H1 (cell line): ENCODE measurements at regions of chr9 and their contacts with region 1.

Region 1: DNA sequence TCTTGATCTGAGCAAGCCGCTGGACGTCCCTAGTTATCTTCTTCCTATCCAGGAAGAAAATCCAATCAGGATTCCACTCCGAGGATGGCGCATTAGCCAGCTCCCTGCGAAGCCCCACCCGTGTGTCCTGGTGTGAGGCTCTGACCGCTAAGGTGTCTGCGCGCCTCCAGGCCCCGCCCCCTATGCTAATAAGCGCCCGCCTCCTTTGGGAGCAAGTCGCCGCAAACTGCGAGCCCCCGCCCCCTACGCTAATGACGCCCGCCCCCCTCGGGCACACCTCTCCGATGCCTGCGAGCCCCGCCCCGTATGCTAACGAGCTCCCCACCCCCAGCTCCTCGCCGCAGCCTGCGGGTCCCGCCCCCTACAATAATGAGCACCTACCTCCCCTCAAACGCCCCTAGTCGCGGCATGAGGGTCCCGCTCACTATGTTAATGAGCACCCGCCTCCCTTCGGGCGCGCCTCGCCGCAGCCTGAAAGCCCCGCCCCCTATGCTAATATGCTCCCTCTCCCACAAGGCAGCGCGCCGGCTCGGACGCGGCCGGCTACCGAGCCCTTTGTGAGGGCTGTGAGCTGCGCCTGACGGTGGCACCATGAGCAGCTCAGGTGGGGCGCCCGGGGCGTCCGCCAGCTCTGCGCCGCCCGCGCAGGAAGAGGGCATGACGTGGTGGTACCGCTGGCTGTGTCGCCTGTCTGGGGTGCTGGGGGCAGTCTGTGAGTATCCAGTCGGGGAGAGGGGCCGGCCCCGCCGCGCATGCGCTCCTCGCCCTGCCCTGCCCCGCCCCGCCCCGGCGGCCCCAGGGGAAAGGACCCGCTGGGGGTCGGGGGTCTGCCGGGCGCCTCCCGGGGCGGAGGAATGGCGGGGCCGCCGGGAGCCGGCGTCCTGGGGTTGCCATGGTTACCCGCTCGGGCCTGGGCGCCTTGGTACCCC is at the start of gene CACFD1:
- DNase-seq: peak; percentile 95 to 96
- H3K4me3 ChIP-seq: peak within 1 kb of the TSS; percentile 67 to 74 (median 70)
- H3K27ac ChIP-seq: peak within 1 kb of the TSS; percentile 88
- H3K4me1 ChIP-seq: peaks cover 2 to 15% (median 11%) of the 10 kb centered on the region in 4 experiments
- H3K27me3 ChIP-seq: no peaks in the 10 kb centered on the region; a peak in 1 of 7 replicates
- CTCF ChIP-seq: no peak
- EP300 ChIP-seq: no peak
- POLR2A ChIP-seq: peak in 1 of 2 experiments; percentile 85; a peak in 2 of 3 replicates
- RAD21 ChIP-seq: no peak
- total RNA-seq, gene CACFD1: 13.3 and 13.4 TPM in 2 replicates

Region 2: GRCh38 chr9:133347985-133348717 is 111.6 kb before region 1 on chr9 and contains the starts of genes MED22 and RPL7A:
- CTCF ChIA-PET with region 1: interaction called, 3 read pairs
- POLR2A ChIA-PET with region 1: interaction called, 13 read pairs
- DNase-seq: peak; percentile 77 to 93
- H3K4me3 ChIP-seq: peak within 1 kb of the TSS; percentile 93 to 100 (median 96)
- H3K27ac ChIP-seq: peak within 1 kb of the TSS; percentile 99
- H3K4me1 ChIP-seq: peaks cover 0 to 10% (median 7%) of the 10 kb centered on the region in 4 experiments; a peak in 6 of 7 replicates
- H3K27me3 ChIP-seq: no peaks in the 10 kb centered on the region
- CTCF ChIP-seq: no peak
- EP300 ChIP-seq: no peak
- POLR2A ChIP-seq: peak in 1 of 2 experiments; percentile 97; a peak in 1 of 3 replicates
- RAD21 ChIP-seq: no peak
- total RNA-seq, gene MED22: 56.4 and 61.8 TPM in 2 replicates
- total RNA-seq, gene RPL7A: 2,578 and 2,633 TPM in 2 replicates

Region 3: DNA sequence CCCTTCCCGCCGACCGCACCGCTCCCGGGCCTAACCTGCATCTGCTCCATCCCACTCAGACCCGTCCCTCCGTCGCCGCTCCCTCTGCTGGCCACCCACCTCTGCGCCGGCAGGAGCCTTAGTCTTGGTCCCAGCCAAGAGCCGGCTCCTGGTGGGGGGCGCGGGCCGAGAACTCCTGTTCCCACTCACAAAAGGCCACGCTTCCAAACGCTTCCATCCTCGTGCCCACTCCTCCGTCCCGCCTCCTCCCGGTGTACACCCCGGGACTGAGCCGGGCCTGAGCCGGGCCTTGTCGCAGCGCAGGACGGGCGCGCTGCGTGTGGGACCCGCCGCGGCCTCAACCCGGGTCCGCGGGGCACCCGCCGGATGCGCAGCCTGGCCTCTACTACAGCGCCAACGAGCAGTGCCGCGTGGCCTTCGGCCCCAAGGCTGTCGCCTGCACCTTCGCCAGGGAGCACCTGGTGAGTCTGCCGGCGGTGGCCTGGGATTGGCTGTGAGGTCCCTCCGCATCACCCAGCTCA is 30.0 kb before region 1 on chr9:
- CTCF ChIA-PET with region 1: interaction called, 6 read pairs
- POLR2A ChIA-PET with region 1: interaction called, 10 read pairs
- DNase-seq: peak in 1 of 2 experiments; percentile 88
- H3K4me3 ChIP-seq: peak overlapping the region; percentile 39 to 65 (median 44)
- H3K27ac ChIP-seq: no peak overlapping the region
- H3K4me1 ChIP-seq: peaks cover 0 to 4% (median under 1%) of the 10 kb centered on the region in 4 experiments; a peak in 3 of 7 replicates
- H3K27me3 ChIP-seq: peaks cover 0 to 11% (median 4%) of the 10 kb centered on the region in 4 experiments; a peak in 5 of 7 replicates
- CTCF ChIP-seq: peak in 2 of 3 experiments; percentile 55 to 68; a peak in 3 of 4 replicates
- EP300 ChIP-seq: no peak
- POLR2A ChIP-seq: no peak
- RAD21 ChIP-seq: peak; percentile 1 to 29; a peak in 2 of 4 replicates

Region 4: GRCh38 chr9:133443982-133444381 is 15.8 kb before region 1 on chr9:
- CTCF ChIA-PET with region 1: interaction called, 64 read pairs
- POLR2A ChIA-PET with region 1: interaction called, 6 read pairs
- DNase-seq: no peak
- H3K4me3 ChIP-seq: no peak overlapping the region
- H3K27ac ChIP-seq: no peak overlapping the region
- H3K4me1 ChIP-seq: no peaks in the 10 kb centered on the region
- H3K27me3 ChIP-seq: no peaks in the 10 kb centered on the region
- CTCF ChIP-seq: no peak
- EP300 ChIP-seq: no peak
- POLR2A ChIP-seq: no peak
- RAD21 ChIP-seq: no peak

Region 5: DNA sequence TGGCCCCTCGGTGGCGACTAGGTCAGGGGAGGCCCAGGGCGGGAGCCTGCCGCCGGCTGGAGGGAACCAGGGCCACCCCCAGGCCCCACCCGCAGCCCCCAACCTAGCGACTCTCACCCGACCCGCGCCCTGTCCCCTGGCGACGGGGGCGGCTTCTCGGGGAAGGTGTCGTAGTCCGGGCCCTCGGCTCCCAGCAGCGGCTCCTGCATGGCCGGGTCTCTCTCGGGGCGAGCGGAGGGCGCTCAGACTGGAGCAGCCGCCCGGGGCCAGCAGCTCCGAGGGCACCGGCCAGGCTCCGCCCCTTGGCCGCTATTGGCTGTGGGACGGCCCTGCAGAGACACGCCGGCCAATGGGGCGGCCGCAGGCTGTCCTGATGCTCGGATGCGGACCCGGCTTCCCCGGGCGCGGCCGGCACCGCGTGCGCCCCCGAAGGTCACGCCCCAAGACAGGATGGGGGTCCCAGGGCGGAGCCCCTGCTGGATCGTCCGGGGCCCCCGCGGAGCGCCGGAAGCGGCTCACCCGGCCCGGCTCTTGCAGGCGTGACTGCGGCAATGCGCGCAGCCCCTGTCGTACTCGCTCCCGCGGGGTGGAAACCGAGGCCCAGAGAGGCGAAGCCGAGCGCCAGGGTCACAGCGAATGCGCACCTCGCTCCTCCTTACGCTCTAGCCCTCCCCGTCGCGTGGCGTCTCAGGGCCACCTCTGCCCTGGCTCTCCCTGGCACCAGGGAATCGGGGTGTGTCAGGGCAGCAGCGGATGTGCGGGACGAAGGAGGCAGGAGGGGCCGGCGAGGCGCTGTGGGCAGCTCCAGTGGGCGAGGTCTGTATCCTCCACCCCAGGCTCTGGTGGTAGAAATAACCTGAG is 19.3 kb after region 1 on chr9 and contains the start of gene SLC2A6:
- CTCF ChIA-PET with region 1: interaction called, 11 read pairs
- POLR2A ChIA-PET with region 1: interaction called, 14 read pairs
- DNase-seq: peak; percentile 74 to 94
- H3K4me3 ChIP-seq: peak within 1 kb of the TSS; percentile 57 to 81 (median 60)
- H3K27ac ChIP-seq: no peak within 1 kb of the TSS
- H3K4me1 ChIP-seq: peaks cover 0 to 7% (median 4%) of the 10 kb centered on the region in 4 experiments; a peak in 6 of 7 replicates
- H3K27me3 ChIP-seq: peaks cover 0 to 4% (median 0%) of the 10 kb centered on the region in 4 experiments; a peak in 2 of 7 replicates
- CTCF ChIP-seq: no peak
- EP300 ChIP-seq: no peak
- POLR2A ChIP-seq: peak in 1 of 2 experiments; percentile 71; a peak in 2 of 3 replicates
- RAD21 ChIP-seq: no peak
- total RNA-seq, gene SLC2A6: 16.6 and 17.9 TPM in 2 replicates

Region 6: DNA sequence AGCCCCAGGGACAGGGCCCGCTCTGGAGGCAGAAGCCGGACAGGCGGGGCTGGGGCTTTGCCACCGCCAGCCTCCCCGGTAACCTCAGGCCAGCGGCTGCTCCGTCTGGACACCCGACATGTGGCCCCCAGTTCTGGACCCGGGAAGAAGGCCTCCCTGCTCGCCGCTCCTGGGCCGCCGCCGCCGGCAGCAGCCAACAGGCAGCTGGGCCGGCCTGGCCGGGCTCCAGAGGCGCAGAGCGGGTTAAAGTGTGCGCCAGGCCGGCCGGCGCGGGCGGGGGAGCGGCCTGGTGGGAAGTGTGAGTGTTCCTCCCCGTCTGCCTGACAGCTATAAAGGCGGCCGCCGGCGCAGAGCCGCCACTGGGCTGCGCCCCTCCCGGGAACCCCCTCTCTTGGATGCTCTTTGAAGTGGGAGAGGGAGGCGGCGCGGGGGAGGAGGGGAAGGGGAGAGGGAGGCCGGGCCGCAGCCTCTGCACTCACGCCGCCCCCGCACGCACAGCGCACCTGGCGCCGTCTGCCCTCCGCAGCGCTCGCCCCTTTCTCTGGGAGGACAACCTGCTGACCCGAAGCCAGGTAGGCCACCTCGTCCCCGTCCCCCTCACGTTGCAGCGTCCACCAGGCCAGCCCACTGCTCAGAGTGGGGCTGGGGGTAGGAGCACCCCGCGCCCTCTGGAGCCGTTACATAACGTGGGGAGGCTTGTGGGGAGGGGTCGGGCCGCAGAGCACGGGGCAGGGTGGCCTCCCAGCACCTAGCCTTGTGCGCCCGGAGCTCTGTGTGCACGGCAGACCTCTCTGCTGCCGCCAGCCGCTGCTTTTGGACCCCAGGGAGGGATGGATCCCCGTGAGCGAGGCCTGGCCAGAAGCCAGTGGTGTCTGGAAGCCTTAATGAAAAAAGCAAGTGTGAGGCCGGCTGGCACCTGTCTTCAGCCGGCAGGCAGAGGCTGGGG is 74.9 kb after region 1 on chr9 and contains the start of gene ADAMTSL2:
- CTCF ChIA-PET with region 1: no interaction called
- POLR2A ChIA-PET with region 1: no interaction called
- DNase-seq: peak in 1 of 2 experiments; percentile 79
- H3K4me3 ChIP-seq: peak within 1 kb of the TSS; percentile 21 to 59 (median 32); a peak in 6 of 8 replicates
- H3K27ac ChIP-seq: no peak within 1 kb of the TSS
- H3K4me1 ChIP-seq: peaks cover 0 to 35% (median 16%) of the 10 kb centered on the region in 4 experiments; a peak in 6 of 7 replicates
- H3K27me3 ChIP-seq: peaks cover 0 to 31% (median 18%) of the 10 kb centered on the region in 4 experiments; a peak in 6 of 7 replicates
- CTCF ChIP-seq: no peak
- EP300 ChIP-seq: no peak
- POLR2A ChIP-seq: no peak
- RAD21 ChIP-seq: no peak
- total RNA-seq, gene ADAMTSL2: 0.69 and 0.74 TPM in 2 replicates

Region 7: DNA sequence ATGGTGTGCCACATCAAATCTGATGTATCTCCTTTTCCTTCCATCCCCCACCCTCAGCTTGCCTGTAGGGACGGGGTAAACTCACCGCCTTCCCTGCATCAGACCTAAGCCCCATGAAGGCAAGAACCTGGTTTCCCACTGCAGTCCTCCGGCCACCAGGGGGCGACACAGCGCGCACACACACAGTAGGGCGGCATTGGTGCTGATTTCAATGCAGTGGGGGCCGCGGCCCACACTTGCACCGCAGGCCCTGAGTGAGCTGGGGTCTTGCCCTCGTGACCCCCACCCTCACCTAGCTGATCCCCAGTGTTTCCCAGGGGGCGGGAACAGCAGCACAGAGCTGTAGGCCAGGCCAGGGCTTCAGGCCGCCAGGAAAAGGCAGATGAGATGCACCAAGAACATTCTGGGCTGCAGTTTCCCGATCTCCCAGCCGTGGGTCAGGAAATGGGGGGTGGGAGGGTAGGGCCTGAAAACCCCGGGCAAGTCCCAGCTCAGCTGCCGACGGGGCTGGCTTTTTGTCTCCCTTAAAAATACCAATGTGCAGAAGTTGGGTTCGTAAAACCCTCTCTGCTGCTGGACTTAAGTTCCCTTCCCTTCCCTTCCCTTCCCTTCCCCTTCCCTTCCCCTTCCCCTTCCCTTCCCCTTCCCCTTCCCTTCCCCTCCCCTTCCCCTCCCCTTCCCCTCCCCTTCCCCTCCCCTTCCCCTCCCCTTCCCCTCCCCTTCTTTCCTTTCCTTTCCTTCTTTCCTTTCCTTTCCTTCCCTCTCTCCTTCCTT is 129.9 kb after region 1 on chr9:
- CTCF ChIA-PET with region 1: no interaction called
- POLR2A ChIA-PET with region 1: no interaction called
- DNase-seq: peak; percentile 39 to 95
- H3K4me3 ChIP-seq: no peak overlapping the region
- H3K27ac ChIP-seq: no peak overlapping the region
- H3K4me1 ChIP-seq: peaks cover 0 to 16% (median 14%) of the 10 kb centered on the region in 4 experiments; a peak in 6 of 7 replicates
- H3K27me3 ChIP-seq: no peaks in the 10 kb centered on the region
- CTCF ChIP-seq: peak in 2 of 3 experiments; percentile 83 to 97; a peak in 3 of 4 replicates
- EP300 ChIP-seq: no peak
- POLR2A ChIP-seq: no peak
- RAD21 ChIP-seq: peak; percentile 54 to 66; a peak in 3 of 4 replicates